Naive thymus-derived CD4-positive, alpha-beta T cell (primary cell): ENCODE measurements at regions of chr9 and their contacts with region 1.

Region 1: GRCh38 chr9:132406554-132407122 is at the start of gene TTF1:
- DNase-seq: peak; percentile 86 to 96 (median 93)
- ATAC-seq: peak; percentile 89
- H3K4me3 ChIP-seq: peak within 1 kb of the TSS; percentile 64
- H3K4me3 Mint-ChIP-seq: peak within 1 kb of the TSS; percentile 77 to 97 (median 92)
- H3K27ac ChIP-seq: peak within 1 kb of the TSS; percentile 74
- H3K27ac Mint-ChIP-seq: peak within 1 kb of the TSS; percentile 77 to 97 (median 90)
- H3K4me1 ChIP-seq: peaks cover 23 to 51% of the 10 kb centered on the region in 2 donors
- H3K4me1 Mint-ChIP-seq: peaks cover 42 to 62% (median 55%) of the 10 kb centered on the region in 7 donors
- H3K27me3 ChIP-seq: peaks cover 0 to 4% of the 10 kb centered on the region in 2 donors
- H3K27me3 Mint-ChIP-seq: peaks cover 10 to 27% (median 10%) of the 10 kb centered on the region in 5 donors
- total RNA-seq, gene TTF1: 10.6 to 26.0 (median 20.1) TPM

Region 2: GRCh38 chr9:132240753-132241493 is 165.7 kb before region 1 on chr9:
- CTCF ChIA-PET with region 1: no interaction called
- POLR2A ChIA-PET with region 1: no interaction called
- intact Hi-C with region 1: loop called in 1 of 2 experiments (anchors 1 kb)
- DNase-seq: peak; percentile 98 to 100 (median 99)
- ATAC-seq: peak; percentile 94
- H3K4me3 ChIP-seq: peak overlapping the region; percentile 77
- H3K4me3 Mint-ChIP-seq: peak overlapping the region; percentile 97 to 99 (median 98)
- H3K27ac ChIP-seq: peak overlapping the region; percentile 69
- H3K27ac Mint-ChIP-seq: peak overlapping the region; percentile 90 to 96 (median 94)
- H3K4me1 ChIP-seq: peaks cover 11 to 17% of the 10 kb centered on the region in 2 donors
- H3K4me1 Mint-ChIP-seq: peaks cover 5 to 24% (median 21%) of the 10 kb centered on the region in 7 donors
- H3K27me3 ChIP-seq: no peaks in the 10 kb centered on the region
- H3K27me3 Mint-ChIP-seq: peaks cover 0 to 15% (median 0%) of the 10 kb centered on the region in 5 donors

Region 3: DNA sequence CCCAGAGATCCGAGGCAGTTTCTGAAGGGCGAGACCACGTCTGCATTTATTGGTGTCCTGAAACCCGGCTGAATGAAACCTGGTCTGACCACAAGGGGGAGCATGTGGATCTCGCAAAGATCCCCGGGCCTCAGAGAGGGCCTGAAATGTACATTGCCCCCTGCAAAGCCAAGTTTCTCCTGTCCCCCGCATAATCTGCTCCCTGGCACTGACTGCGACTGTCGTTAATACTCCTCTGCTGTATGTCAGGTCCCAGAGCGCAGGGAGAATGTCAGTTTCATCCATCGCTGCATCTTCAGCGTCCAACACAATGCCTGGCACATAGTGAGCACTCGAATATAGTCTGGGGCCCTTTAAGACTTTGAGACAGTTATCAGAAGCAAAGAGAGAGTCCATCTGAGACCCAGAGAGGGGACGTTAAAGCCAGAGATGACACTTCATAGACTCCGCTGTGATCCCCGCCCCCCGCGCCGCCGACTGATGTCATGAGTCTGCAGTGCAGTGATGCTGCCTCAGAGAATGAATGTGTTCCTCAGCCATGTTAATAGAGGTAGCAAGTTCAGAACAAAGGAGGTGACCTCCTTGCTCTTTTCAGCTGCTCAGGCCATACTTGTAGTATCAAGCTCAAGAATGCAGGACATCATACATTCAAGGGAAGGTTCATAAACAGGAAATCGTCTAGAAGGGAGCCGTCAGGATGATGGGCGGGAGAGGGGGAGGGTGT is 101.3 kb after region 1 on chr9:
- CTCF ChIA-PET with region 1: no interaction called
- POLR2A ChIA-PET with region 1: no interaction called
- intact Hi-C with region 1: loop called (anchors 1 to 5 kb)
- DNase-seq: peak; percentile 21 to 62 (median 52)
- ATAC-seq: peak; percentile 74
- H3K4me3 ChIP-seq: no peak overlapping the region
- H3K4me3 Mint-ChIP-seq: no peak overlapping the region
- H3K27ac ChIP-seq: no peak overlapping the region
- H3K27ac Mint-ChIP-seq: no peak overlapping the region
- H3K4me1 ChIP-seq: peaks cover 0 to 7% of the 10 kb centered on the region in 2 donors
- H3K4me1 Mint-ChIP-seq: peaks cover 0 to 14% (median 12%) of the 10 kb centered on the region in 7 donors
- H3K27me3 ChIP-seq: no peaks in the 10 kb centered on the region
- H3K27me3 Mint-ChIP-seq: peaks cover 3 to 24% (median 15%) of the 10 kb centered on the region in 5 donors

Region 4: DNA sequence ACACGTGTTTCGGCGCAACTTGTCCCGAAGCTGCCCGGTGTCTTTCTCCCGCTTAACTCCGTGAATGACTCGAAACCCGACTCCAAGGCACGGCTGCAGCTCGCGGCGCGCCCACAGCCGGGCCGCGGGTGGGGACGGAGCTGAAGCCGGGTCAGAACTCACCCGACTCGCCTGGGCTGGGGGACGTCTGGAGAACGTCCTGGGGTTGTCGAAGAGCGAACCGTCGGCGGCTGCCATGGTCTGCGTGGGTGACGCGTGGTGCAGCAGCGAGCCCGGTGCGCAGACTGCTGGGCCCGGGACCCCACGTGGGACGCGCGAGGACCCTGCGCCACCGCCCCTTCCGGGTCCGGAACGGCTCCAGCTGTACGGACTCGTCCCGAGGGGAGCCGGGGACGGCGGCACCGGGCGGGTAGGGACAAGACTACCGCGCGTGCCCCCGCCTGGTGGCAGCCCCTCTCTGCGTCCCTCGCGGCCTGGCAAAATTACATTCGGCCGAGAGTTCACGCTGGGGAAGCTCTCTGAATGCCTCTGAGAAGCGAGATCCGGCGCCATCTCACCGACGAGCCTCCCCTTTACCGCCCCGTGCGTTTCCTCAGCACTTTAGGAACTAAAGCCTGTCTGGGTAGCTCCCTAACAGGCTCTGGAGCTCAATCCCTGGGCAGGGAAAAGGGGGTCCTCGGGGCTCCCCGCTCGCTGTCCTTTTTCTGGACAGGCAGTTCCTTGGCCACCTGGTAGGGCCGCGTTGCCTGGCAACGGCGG is 263.2 kb after region 1 on chr9 and contains the start of gene DDX31:
- CTCF ChIA-PET with region 1: interaction called, 3 read pairs
- POLR2A ChIA-PET with region 1: interaction called, 4 read pairs
- intact Hi-C with region 1: loop called (anchors 1 kb)
- DNase-seq: peak; percentile 84 to 97 (median 88)
- ATAC-seq: peak; percentile 90
- H3K4me3 ChIP-seq: peak within 1 kb of the TSS; percentile 100
- H3K4me3 Mint-ChIP-seq: peak within 1 kb of the TSS; percentile 83 to 92 (median 90)
- H3K27ac ChIP-seq: peak within 1 kb of the TSS; percentile 94
- H3K27ac Mint-ChIP-seq: peak within 1 kb of the TSS; percentile 87 to 96 (median 91)
- H3K4me1 ChIP-seq: peaks cover 16 to 19% of the 10 kb centered on the region in 2 donors
- H3K4me1 Mint-ChIP-seq: peaks cover 20 to 67% (median 55%) of the 10 kb centered on the region in 7 donors
- H3K27me3 ChIP-seq: no peaks in the 10 kb centered on the region
- H3K27me3 Mint-ChIP-seq: no peaks in the 10 kb centered on the region
- total RNA-seq, gene DDX31: 13.9 to 28.0 (median 18.7) TPM

Region 5: GRCh38 chr9:132877824-132878694 is 471.4 kb after region 1 on chr9 and contains the start of gene AK8:
- CTCF ChIA-PET with region 1: no interaction called
- POLR2A ChIA-PET with region 1: no interaction called
- intact Hi-C with region 1: loop called in 1 of 2 experiments (anchors 1 kb)
- DNase-seq: peak; percentile 69 to 88 (median 80)
- ATAC-seq: peak; percentile 91
- H3K4me3 ChIP-seq: peak within 1 kb of the TSS; percentile 98
- H3K4me3 Mint-ChIP-seq: peak within 1 kb of the TSS; percentile 73 to 93 (median 81)
- H3K27ac ChIP-seq: peak within 1 kb of the TSS; percentile 74
- H3K27ac Mint-ChIP-seq: peak within 1 kb of the TSS; percentile 71 to 89 (median 85)
- H3K4me1 ChIP-seq: peaks cover 0 to 6% of the 10 kb centered on the region in 2 donors
- H3K4me1 Mint-ChIP-seq: peaks cover 5 to 30% (median 7%) of the 10 kb centered on the region in 7 donors
- H3K27me3 ChIP-seq: no peaks in the 10 kb centered on the region
- H3K27me3 Mint-ChIP-seq: peaks cover 0 to 12% (median 0%) of the 10 kb centered on the region in 5 donors
- total RNA-seq, gene AK8: 0.10 to 0.20 TPM in 2 of 5 experiments, not detected in the others

Region 6: DNA sequence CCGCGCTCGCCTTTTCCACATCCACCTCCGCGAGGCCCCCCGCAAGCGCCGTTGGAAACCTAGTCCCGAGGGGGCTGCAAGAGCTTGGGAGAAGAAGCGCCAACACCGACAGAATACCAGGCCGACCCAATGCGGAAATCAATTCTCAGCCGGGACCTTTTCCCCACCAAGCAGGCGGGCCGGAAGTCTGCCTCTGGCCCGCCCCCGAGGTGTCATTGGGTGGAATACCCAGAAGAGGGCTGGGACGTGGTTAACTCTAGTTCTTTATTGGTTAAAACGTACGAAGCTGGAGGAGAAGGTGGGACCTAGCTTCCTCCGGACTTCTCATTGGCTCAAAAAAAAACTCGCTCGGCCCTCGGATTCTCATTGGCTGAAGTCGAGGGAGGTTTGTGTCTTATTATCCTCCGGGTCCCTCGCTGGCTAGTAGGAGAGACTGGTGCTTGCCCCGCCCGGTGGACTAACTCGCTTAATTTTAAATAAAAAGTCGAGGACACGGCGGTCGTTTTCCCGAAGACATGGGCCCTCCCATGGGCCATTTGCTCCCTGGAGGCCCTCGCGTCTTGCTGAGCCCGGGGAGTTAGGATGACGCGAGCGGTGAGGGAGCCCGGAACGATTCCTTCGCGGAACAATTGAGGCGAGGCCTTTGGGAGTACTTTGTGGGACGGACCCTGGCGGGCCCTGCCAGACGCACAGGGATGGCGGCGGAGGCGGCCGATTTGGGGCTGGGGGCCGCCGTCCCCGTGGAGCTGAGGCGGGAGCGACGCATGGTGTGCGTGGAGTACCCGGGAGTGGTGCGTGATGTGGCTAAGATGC is 623.9 kb after region 1 on chr9 and contains the start of gene GTF3C5:
- CTCF ChIA-PET with region 1: no interaction called
- POLR2A ChIA-PET with region 1: no interaction called
- intact Hi-C with region 1: loop called in 1 of 2 experiments (anchors 5 kb)
- DNase-seq: peak; percentile 77 to 97 (median 94)
- ATAC-seq: peak; percentile 98
- H3K4me3 ChIP-seq: peak within 1 kb of the TSS; percentile 83
- H3K4me3 Mint-ChIP-seq: peak within 1 kb of the TSS; percentile 87 to 100 (median 98)
- H3K27ac ChIP-seq: peak within 1 kb of the TSS; percentile 90
- H3K27ac Mint-ChIP-seq: peak within 1 kb of the TSS; percentile 94 to 99 (median 98)
- H3K4me1 ChIP-seq: peaks cover 13 to 25% of the 10 kb centered on the region in 2 donors
- H3K4me1 Mint-ChIP-seq: peaks cover 34 to 81% (median 59%) of the 10 kb centered on the region in 7 donors
- H3K27me3 ChIP-seq: no peaks in the 10 kb centered on the region
- H3K27me3 Mint-ChIP-seq: no peaks in the 10 kb centered on the region
- total RNA-seq, gene GTF3C5: 43.9 to 77.9 (median 73.9) TPM

Region 7: GRCh38 chr9:133060417-133060841 is 653.8 kb after region 1 on chr9:
- CTCF ChIA-PET with region 1: no interaction called
- POLR2A ChIA-PET with region 1: no interaction called
- intact Hi-C with region 1: no loop called
- DNase-seq: peak in 3 of 9 donors; percentile 18 to 24 (median 20)
- ATAC-seq: no peak
- H3K4me3 ChIP-seq: no peak overlapping the region
- H3K4me3 Mint-ChIP-seq: peak overlapping the region; percentile 34 to 76 (median 68)
- H3K27ac ChIP-seq: no peak overlapping the region
- H3K27ac Mint-ChIP-seq: peak overlapping the region; percentile 2 to 90 (median 75)
- H3K4me1 ChIP-seq: peaks cover 5 to 49% of the 10 kb centered on the region in 2 donors
- H3K4me1 Mint-ChIP-seq: peaks cover 25 to 67% (median 48%) of the 10 kb centered on the region in 7 donors
- H3K27me3 ChIP-seq: no peaks in the 10 kb centered on the region
- H3K27me3 Mint-ChIP-seq: no peaks in the 10 kb centered on the region